Activated naive CD8-positive, alpha-beta T cell treated with anti-CD3 and anti-CD28 coated beads, Interleukin-2, amount 10 ng/mL, durations not matched to agents 7 days and 5 days (primary cell): ENCODE measurements at regions of chr19 and their contacts with region 1.

Region 1: GRCh38 chr19:57819475-57820148 is 4.9 kb upstream of the ZNF552 start:
- DNase-seq: peak; percentile 71
- ATAC-seq: peak; percentile 90
- H3K4me3 Mint-ChIP-seq: peak overlapping the region; percentile 92
- H3K27ac Mint-ChIP-seq: peak overlapping the region; percentile 98
- H3K4me1 Mint-ChIP-seq: peaks cover 40% of the 10 kb centered on the region
- H3K27me3 Mint-ChIP-seq: no peaks in the 10 kb centered on the region

Region 2: DNA sequence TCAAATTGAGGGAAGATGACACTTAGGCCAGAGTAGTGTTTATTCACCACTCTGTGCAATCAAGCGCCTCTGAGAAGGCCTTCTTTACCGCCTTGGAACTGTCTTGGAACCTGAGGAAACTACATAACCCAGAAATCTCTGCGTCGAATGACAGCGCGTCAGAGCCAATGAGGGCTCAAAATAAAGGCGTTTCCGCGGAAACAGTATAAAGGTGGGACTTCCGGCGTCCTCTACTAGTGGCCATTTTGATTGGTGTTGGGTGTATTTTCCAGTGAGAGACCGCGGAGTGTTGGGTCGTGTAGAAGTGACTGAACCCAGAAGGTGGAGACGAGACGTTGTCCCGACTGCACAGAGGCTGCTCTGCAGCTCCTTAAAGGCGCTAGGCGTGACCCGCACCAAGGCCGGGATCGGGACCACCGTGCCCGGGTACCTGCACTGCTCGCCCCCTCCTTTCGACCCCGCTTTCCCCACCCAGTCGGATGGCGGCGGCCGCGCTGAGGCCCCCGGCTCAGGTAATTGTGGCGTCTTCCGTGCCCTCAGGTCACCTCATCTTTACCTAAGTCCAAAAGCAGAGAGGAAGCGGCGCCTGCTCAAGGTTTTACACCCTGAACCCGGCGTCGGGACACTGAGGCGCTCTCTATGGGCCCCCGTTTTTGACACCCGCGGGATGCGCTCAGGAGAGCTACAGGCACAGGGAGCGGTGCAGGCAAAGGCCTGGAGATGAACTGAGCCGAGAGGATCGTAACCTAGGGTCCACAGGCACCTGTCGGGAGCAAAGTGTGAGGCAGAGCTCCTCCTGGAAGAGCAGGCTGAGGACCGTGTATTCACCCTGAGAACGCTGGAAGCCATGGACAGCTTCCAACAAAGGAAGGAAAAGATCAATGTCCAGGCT is 72.8 kb before region 1 on chr19 and contains the start of gene ZNF776:
- POLR2A ChIA-PET with region 1: interaction called, 19 read pairs
- DNase-seq: peak; percentile 75
- ATAC-seq: peak; percentile 96
- H3K4me3 Mint-ChIP-seq: peak within 1 kb of the TSS; percentile 99
- H3K27ac Mint-ChIP-seq: peak within 1 kb of the TSS; percentile 97
- H3K4me1 Mint-ChIP-seq: peaks cover 15% of the 10 kb centered on the region
- H3K27me3 Mint-ChIP-seq: no peaks in the 10 kb centered on the region
- total RNA-seq, gene ZNF776: 27.9 to 29.0 TPM

Region 3: DNA sequence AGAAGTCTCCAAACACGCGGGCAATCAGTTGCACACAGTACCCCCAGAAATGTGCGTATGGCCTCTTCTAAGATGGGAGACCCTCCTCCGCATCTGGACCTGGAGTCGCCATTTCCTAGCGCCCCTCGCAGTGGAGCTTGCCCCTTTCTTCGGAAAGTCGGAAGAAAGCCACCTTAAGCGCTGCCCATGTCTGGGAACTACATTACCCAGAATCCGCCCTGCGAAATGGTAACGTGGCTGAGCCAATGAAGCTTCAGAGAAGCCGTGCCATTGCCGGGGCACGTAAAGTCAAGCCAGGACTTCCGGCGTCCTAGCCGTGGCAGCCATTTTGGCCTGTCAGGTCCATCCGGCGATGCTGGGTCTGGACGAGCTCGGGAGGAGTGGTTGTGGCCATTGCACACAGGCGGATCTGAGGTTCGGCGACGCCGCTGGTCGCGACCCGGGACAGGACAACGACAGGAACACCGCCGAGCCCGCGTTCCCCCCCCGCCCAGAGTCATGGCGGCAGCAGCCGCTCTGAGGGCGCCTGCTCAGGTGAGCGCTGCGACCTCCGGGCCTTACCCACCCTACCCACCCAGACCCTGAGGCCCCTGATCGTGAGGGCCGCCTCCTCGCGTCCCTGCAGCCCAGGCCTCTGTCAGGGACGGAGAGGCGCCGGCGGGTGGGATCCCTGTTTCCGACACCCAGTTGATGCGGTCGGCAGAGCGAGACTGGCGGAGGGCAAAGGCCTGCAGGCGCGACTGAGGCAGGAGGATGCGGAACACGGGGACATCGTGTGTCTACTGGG is 50.1 kb before region 1 on chr19 and contains the start of gene ZNF586:
- POLR2A ChIA-PET with region 1: interaction called, 17 read pairs
- DNase-seq: peak; percentile 84
- ATAC-seq: peak; percentile 98
- H3K4me3 Mint-ChIP-seq: peak within 1 kb of the TSS; percentile 93
- H3K27ac Mint-ChIP-seq: peak within 1 kb of the TSS; percentile 93
- H3K4me1 Mint-ChIP-seq: peaks cover 26% of the 10 kb centered on the region
- H3K27me3 Mint-ChIP-seq: no peaks in the 10 kb centered on the region
- total RNA-seq, gene ZNF586: 29.0 to 29.2 TPM

Region 4: GRCh38 chr19:57850553-57851017 is 31.0 kb after region 1 on chr19:
- POLR2A ChIA-PET with region 1: interaction called, 13 read pairs
- DNase-seq: no peak
- ATAC-seq: no peak
- H3K4me3 Mint-ChIP-seq: peak overlapping the region; percentile 89
- H3K27ac Mint-ChIP-seq: peak overlapping the region; percentile 86
- H3K4me1 Mint-ChIP-seq: peaks cover 28% of the 10 kb centered on the region
- H3K27me3 Mint-ChIP-seq: no peaks in the 10 kb centered on the region

Region 5: DNA sequence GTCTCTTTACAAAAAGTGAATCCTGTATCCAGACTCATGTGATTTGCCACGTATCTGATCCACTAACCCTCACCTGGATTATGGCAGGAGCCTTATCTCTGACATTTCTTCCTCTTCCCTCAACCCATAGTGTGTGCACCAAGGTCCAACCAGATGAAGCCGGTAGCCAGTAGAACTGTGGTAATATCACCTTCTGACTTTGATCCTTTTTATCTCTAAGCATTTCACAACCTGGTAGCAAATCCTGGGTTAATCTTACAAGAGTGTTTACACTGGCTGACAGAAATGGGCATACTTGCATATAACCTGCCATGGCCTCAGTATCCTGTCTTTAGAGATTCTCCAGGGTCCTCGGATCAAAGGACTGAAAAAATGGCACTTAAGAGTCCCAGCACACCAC is 94.9 kb after region 1 on chr19:
- POLR2A ChIA-PET with region 1: interaction called, 10 read pairs
- DNase-seq: no peak
- ATAC-seq: no peak
- H3K4me3 Mint-ChIP-seq: peak overlapping the region; percentile 18
- H3K27ac Mint-ChIP-seq: no peak overlapping the region
- H3K4me1 Mint-ChIP-seq: peaks cover 20% of the 10 kb centered on the region
- H3K27me3 Mint-ChIP-seq: no peaks in the 10 kb centered on the region